Activated B cell treated with CpG ODN at 0.5 μM for 24 hours (primary cell): ENCODE measurements at regions of chr16 and their contacts with region 1.

Region 1: GRCh38 chr16:69796351-69797118 is 34.4 kb downstream of the WWP2 start:
- DNase-seq: no peak
- ATAC-seq: peak; percentile 88
- H3K4me3 Mint-ChIP-seq: no peak overlapping the region
- H3K27ac Mint-ChIP-seq: no peak overlapping the region
- H3K4me1 Mint-ChIP-seq: peaks cover 10% of the 10 kb centered on the region
- H3K27me3 Mint-ChIP-seq: no peaks in the 10 kb centered on the region
- CTCF ChIP-seq: peak; percentile 92

Region 2: DNA sequence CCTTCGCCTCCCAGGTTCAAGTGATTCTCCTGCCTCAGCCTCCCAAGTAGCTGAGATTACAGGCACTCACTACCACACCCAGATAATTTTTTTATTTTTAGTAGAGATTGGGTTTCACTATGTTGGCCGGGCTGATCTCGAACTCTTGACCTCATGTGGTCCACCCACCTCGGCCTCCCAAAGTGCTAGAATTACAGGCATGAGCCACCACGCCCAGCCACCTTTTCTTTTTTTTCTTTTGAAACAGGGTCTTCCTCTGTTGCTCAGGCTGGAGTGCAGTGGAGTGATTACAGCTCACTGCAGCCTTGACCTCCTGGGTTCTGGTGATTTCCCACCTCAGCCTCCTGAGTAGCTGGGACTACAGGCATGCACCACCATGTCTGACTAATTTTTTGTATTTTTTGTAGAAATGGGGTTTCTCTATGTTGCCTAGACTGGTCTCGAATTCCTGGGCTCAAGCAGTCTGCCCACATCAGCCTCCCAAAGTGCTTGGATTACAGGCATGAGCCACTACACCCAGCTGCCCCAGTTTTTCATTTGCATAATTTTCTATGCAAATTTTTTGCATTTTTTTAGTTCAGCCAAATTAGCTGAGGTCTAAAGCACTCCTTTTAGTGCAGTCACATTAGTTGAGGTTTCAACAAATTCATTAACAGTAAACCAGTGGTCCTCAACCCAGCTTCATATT is 23.1 kb before region 1 on chr16:
- CTCF ChIA-PET with region 1: no interaction called
- POLR2A ChIA-PET with region 1: no interaction called
- intact Hi-C with region 1: no loop called
- DNase-seq: no peak
- ATAC-seq: peak; percentile 56
- H3K4me3 Mint-ChIP-seq: no peak overlapping the region
- H3K27ac Mint-ChIP-seq: peak overlapping the region; percentile 56
- H3K4me1 Mint-ChIP-seq: peaks cover 55% of the 10 kb centered on the region
- H3K27me3 Mint-ChIP-seq: no peaks in the 10 kb centered on the region
- CTCF ChIP-seq: no peak

Region 3: GRCh38 chr16:69812688-69813014 is 16.1 kb after region 1 on chr16:
- CTCF ChIA-PET with region 1: no interaction called
- POLR2A ChIA-PET with region 1: interaction called, 3 read pairs
- intact Hi-C with region 1: loop called (anchors 1 kb)
- DNase-seq: no peak
- ATAC-seq: no peak
- H3K4me3 Mint-ChIP-seq: no peak overlapping the region
- H3K27ac Mint-ChIP-seq: no peak overlapping the region
- H3K4me1 Mint-ChIP-seq: peaks cover 6% of the 10 kb centered on the region
- H3K27me3 Mint-ChIP-seq: no peaks in the 10 kb centered on the region
- CTCF ChIP-seq: no peak

Region 4: GRCh38 chr16:69859105-69859989 is 62.8 kb after region 1 on chr16:
- CTCF ChIA-PET with region 1: no interaction called
- POLR2A ChIA-PET with region 1: no interaction called
- intact Hi-C with region 1: loop called (anchors 1 kb)
- DNase-seq: no peak
- ATAC-seq: no peak
- H3K4me3 Mint-ChIP-seq: no peak overlapping the region
- H3K27ac Mint-ChIP-seq: no peak overlapping the region
- H3K4me1 Mint-ChIP-seq: no peaks in the 10 kb centered on the region
- H3K27me3 Mint-ChIP-seq: no peaks in the 10 kb centered on the region
- CTCF ChIP-seq: no peak

Region 5: GRCh38 chr16:69930117-69930776 is 133.7 kb after region 1 on chr16:
- CTCF ChIA-PET with region 1: interaction called, 20 read pairs
- POLR2A ChIA-PET with region 1: no interaction called
- intact Hi-C with region 1: loop called (anchors 1 kb)
- DNase-seq: peak; percentile 27
- ATAC-seq: peak; percentile 56
- H3K4me3 Mint-ChIP-seq: no peak overlapping the region
- H3K27ac Mint-ChIP-seq: no peak overlapping the region
- H3K4me1 Mint-ChIP-seq: no peaks in the 10 kb centered on the region
- H3K27me3 Mint-ChIP-seq: no peaks in the 10 kb centered on the region
- CTCF ChIP-seq: no peak

Region 6: GRCh38 chr16:70653809-70654771 is 857.6 kb after region 1 on chr16:
- CTCF ChIA-PET with region 1: no interaction called
- POLR2A ChIA-PET with region 1: no interaction called
- intact Hi-C with region 1: loop called (anchors 1 kb)
- DNase-seq: peak; percentile 61
- ATAC-seq: peak; percentile 82
- H3K4me3 Mint-ChIP-seq: no peak overlapping the region
- H3K27ac Mint-ChIP-seq: no peak overlapping the region
- H3K4me1 Mint-ChIP-seq: peaks cover 5% of the 10 kb centered on the region
- H3K27me3 Mint-ChIP-seq: peaks cover 3% of the 10 kb centered on the region
- CTCF ChIP-seq: peak; percentile 20